AG04449 (cell line): ENCODE measurements at regions of chr7 and their contacts with region 1.

Region 1: GRCh38 chr7:129218514-129219062 is 6.2 kb upstream of the AHCYL2 start:
- DNase-seq: no peak
- H3K4me3 ChIP-seq: no peak overlapping the region
- CTCF ChIP-seq: peak; percentile 86

Region 2: DNA sequence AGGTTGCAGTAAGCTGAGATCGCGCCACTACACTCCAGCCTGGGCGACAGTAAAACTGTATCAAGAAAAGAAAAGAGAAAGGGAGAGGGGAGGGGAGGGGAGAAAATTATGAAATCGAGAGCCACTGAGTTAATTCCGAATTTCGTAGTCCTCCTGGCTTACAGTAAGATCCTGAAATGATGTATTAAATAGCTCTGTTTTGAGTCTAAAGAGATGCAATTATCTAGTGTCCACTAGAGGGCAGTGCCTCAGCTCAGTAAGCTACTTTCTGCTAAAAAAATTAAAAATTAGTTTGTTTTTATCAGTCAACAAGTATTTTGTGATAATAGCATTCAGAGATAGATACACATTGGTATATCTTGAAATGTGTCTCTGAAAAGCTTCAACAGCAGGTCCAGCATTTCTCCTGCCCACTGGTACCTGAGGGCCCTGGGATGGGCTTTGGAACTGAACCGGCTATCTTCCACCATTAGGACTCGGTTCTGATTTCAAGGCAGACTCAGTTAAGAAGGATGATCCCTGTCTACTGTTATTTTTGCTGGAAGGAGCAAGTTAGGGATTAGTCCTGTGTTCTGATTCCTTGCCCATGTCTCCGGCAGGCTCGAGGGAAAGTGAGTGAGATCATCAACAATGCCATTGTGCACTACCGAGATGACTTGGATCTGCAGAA is 54.6 kb before region 1 on chr7:
- CTCF ChIA-PET with region 1: interaction called, 297 read pairs
- POLR2A ChIA-PET with region 1: no interaction called
- DNase-seq: peak; percentile 14
- H3K4me3 ChIP-seq: no peak overlapping the region
- CTCF ChIP-seq: peak; percentile 59

Region 3: DNA sequence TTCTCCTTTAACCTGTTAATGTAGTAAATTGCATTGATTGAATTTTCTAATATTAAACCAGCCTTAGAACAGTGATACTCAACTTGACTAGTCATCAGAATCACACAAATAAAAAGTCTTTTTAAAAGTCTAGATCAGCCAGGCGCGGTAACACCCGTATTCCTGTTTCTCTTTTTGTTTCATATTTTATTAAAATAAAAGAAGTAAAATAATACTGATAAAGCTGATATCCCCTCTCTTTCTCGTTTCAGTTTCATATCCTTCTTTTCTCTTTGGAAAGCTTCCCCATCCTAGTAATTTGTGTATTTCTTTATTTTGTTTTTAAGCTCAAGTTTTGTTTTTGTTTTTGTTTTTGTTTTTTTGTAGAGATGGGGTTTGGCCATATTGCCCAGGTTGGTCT is 20.8 kb before region 1 on chr7:
- CTCF ChIA-PET with region 1: interaction called, 10 read pairs
- POLR2A ChIA-PET with region 1: no interaction called
- DNase-seq: no peak
- H3K4me3 ChIP-seq: no peak overlapping the region
- CTCF ChIP-seq: no peak

Region 4: DNA sequence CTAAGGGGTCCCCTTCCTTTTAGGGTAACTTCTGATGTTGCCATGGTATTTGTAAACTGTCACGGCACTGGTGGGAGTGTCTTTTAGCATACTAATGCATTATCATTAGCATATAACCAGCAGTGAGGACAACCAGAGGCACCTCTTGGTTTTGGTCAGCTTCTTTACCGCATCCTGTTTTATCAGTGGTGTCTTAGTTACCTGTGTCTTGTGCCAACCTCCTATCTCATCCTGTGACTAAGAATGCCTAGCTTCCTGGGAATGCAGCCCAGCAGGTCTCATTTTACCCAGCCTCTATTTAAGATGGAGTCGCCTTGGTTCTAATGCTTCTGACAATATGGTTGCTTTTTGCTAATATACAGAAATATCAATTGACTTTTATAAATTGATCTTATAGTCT is 61.2 kb after region 1 on chr7:
- CTCF ChIA-PET with region 1: interaction called, 21 read pairs
- POLR2A ChIA-PET with region 1: no interaction called
- DNase-seq: no peak
- H3K4me3 ChIP-seq: no peak overlapping the region
- CTCF ChIP-seq: no peak

Region 5: GRCh38 chr7:129359638-129360037 is 141.1 kb after region 1 on chr7:
- CTCF ChIA-PET with region 1: interaction called, 16 read pairs
- POLR2A ChIA-PET with region 1: no interaction called
- DNase-seq: no peak
- H3K4me3 ChIP-seq: no peak overlapping the region
- CTCF ChIP-seq: no peak

Region 6: GRCh38 chr7:129468087-129468486 is 249.5 kb after region 1 on chr7:
- CTCF ChIA-PET with region 1: interaction called, 138 read pairs
- POLR2A ChIA-PET with region 1: no interaction called
- DNase-seq: peak; percentile 57
- H3K4me3 ChIP-seq: no peak overlapping the region
- CTCF ChIP-seq: no peak

Region 7: GRCh38 chr7:129644634-129645230 is 426.1 kb after region 1 on chr7:
- CTCF ChIA-PET with region 1: interaction called, 31 read pairs
- POLR2A ChIA-PET with region 1: no interaction called
- DNase-seq: no peak
- H3K4me3 ChIP-seq: no peak overlapping the region
- CTCF ChIP-seq: peak; percentile 14